ENCODE measurements at regions of chr11 and their contacts with region 1.

Region 1: GRCh38 chr11:65027213-65028067 is at the start of gene SNX15:
- DNase-seq: peak; percentile 88 to 96 (median 94)
- H3K4me3 ChIP-seq: peak within 1 kb of the TSS; percentile 62 to 96 (median 77)
- H3K27ac ChIP-seq: peak within 1 kb of the TSS; percentile 48 to 99 (median 94)
- H3K27me3 ChIP-seq: no peaks in the 10 kb centered on the region
- CTCF ChIP-seq: peak; percentile 55 to 91 (median 78)
- total RNA-seq, gene SNX15: 24.6 to 49.9 (median 34.3) TPM

Region 2: GRCh38 chr11:64924102-64924851 is 103.2 kb before region 1 on chr11 and contains the start of gene PPP2R5B:
- intact Hi-C with region 1: loop called (anchors 1 kb)
- DNase-seq: peak; percentile 93 to 98 (median 97)
- H3K4me3 ChIP-seq: peak within 1 kb of the TSS; percentile 71 to 100 (median 98)
- H3K27ac ChIP-seq: peak within 1 kb of the TSS; percentile 87 to 100 (median 98)
- H3K27me3 ChIP-seq: no peaks in the 10 kb centered on the region
- CTCF ChIP-seq: peak in 10 of 56 donors; percentile 9 to 37 (median 14)
- total RNA-seq, gene PPP2R5B: 64.5 to 119 (median 85.0) TPM

Region 3: DNA sequence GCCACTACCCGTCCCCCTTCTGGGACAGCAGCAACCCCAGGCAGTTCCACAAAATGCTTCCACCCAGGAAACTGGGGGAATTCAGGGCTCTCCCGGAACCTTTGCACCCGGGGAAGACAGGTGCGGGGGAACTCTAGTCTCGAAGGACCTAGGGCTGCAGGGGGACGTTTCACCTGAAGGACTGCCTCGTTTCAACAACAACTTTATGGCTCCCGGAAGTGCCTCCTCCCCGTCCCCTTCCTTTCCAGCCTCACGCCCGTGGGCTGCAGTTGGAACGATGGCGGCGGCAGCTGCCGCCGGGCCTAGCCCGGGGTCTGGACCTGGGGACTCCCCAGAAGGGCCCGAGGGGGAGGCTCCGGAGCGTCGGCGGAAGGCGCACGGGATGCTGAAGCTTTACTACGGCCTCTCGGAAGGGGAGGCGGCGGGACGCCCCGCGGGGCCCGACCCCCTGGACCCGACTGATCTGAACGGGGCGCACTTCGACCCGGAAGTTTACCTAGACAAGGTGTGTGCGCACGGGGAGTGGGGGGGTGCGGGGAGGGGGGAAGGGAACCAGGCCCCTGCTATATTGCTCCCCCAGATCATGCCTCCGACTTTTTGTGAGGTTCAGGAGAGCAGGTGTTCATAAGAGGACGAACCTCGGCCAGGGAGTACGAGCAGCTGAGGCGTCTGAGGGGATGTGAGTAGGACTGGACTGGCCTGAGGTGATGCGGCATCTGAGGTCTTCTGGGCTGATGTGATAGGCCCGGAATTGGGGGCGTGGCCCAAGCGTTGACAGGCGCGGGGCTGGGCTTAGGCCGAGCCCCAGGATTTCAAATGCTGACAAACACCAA is 68.8 kb after region 1 on chr11 and contains the start of gene VPS51:
- intact Hi-C with region 1: loop called in 1 of 2 experiments (anchors 1 kb)
- DNase-seq: peak; percentile 77 to 93 (median 89)
- H3K4me3 ChIP-seq: peak within 1 kb of the TSS; percentile 59 to 100 (median 86)
- H3K27ac ChIP-seq: peak within 1 kb of the TSS; percentile 77 to 98 (median 94)
- H3K27me3 ChIP-seq: no peaks in the 10 kb centered on the region
- CTCF ChIP-seq: peak in 40 of 56 donors; percentile 5 to 50 (median 20)
- total RNA-seq, gene VPS51: 97.3 to 182 (median 137) TPM

Region 4: GRCh38 chr11:65111744-65112414 is 84.4 kb after region 1 on chr11 and contains the start of gene TM7SF2:
- intact Hi-C with region 1: loop called (anchors 5 kb)
- DNase-seq: peak; percentile 97 to 100 (median 99)
- H3K4me3 ChIP-seq: peak within 1 kb of the TSS; percentile 50 to 91 (median 73)
- H3K27ac ChIP-seq: peak within 1 kb of the TSS; percentile 37 to 92 (median 85)
- H3K27me3 ChIP-seq: no peaks in the 10 kb centered on the region
- CTCF ChIP-seq: peak in 19 of 56 donors; percentile 11 to 59 (median 31)
- total RNA-seq, gene TM7SF2: 26.8 to 66.8 (median 45.6) TPM

Region 5: DNA sequence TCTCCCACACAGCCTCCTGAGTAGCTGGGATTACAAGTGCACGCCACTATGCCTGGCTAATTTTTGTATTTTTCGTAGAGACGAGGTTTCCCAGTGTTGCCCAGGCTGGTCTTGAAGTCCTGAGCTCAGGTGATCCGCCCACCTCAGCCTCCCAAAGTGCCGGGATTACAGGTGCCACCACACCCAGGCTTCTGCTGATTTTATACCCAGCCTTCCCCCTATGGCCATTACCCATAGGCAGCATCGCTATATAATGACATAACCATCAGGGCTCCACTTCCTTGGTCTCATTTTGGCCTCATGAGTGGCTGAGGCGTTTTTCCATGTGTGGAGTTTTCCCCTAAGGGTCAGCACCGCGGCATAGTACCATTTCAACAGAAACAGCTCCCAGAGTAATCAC is 1180.4 kb after region 1 on chr11:
- intact Hi-C with region 1: no loop called
- DNase-seq: no peak
- H3K4me3 ChIP-seq: no peak overlapping the region
- H3K27ac ChIP-seq: no peak overlapping the region
- H3K27me3 ChIP-seq: no peaks in the 10 kb centered on the region
- CTCF ChIP-seq: no peak

Measured in dorsolateral prefrontal cortex (tissue), 120 donors.